ENCODE measurements at regions of chrX and their contacts with region 1.

Region 1: DNA sequence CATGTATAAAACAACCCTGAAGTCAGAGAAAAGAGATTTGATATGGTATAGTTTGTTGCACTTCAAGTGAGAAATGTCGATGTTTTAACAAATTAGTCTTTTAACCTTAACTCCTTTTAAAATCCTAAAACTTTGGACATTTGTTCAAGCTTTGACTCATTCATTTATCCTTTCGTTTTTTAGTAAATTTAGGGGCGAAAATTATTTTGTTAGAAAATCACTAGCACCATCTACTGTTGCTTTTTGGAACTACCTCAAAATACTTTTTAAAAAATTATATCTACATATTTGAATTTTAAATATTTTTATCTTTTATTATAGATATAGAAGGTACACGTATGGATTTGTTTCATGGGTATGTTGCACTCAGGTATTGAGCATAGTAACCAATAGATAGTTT is 165.1 kb upstream of the POF1B start:
- DNase-seq: no peak
- ATAC-seq: no peak
- H3K4me3 ChIP-seq: no peak overlapping the region
- H3K4me3 Mint-ChIP-seq: no peak overlapping the region
- H3K27ac ChIP-seq: no peak overlapping the region
- H3K27ac Mint-ChIP-seq: no peak overlapping the region
- H3K4me1 ChIP-seq: no peaks in the 10 kb centered on the region
- H3K4me1 Mint-ChIP-seq: no peaks in the 10 kb centered on the region
- H3K27me3 ChIP-seq: no peaks in the 10 kb centered on the region
- H3K27me3 Mint-ChIP-seq: no peaks in the 10 kb centered on the region
- CTCF ChIP-seq: peak; percentile 20

Region 2: GRCh38 chrX:85084770-85085393 is 459.7 kb before region 1 on chrX:
- CTCF ChIA-PET with region 1: no interaction called
- POLR2A ChIA-PET with region 1: no interaction called
- intact Hi-C with region 1: loop called in 1 of 2 experiments (anchors 5 kb)
- DNase-seq: peak in 3 of 9 experiments; percentile 10 to 39 (median 24)
- ATAC-seq: no peak
- H3K4me3 ChIP-seq: no peak overlapping the region
- H3K4me3 Mint-ChIP-seq: no peak overlapping the region
- H3K27ac ChIP-seq: no peak overlapping the region
- H3K27ac Mint-ChIP-seq: no peak overlapping the region
- H3K4me1 ChIP-seq: no peaks in the 10 kb centered on the region
- H3K4me1 Mint-ChIP-seq: no peaks in the 10 kb centered on the region
- H3K27me3 ChIP-seq: no peaks in the 10 kb centered on the region
- H3K27me3 Mint-ChIP-seq: no peaks in the 10 kb centered on the region
- CTCF ChIP-seq: peak; percentile 70

Region 3: GRCh38 chrX:85111347-85111746 is 433.3 kb before region 1 on chrX:
- CTCF ChIA-PET with region 1: no interaction called
- POLR2A ChIA-PET with region 1: no interaction called
- intact Hi-C with region 1: loop called in 1 of 2 experiments (anchors 2 kb)
- DNase-seq: peak in 2 of 9 experiments; percentile 2
- ATAC-seq: no peak
- H3K4me3 ChIP-seq: no peak overlapping the region
- H3K4me3 Mint-ChIP-seq: no peak overlapping the region
- H3K27ac ChIP-seq: no peak overlapping the region
- H3K27ac Mint-ChIP-seq: no peak overlapping the region
- H3K4me1 ChIP-seq: no peaks in the 10 kb centered on the region
- H3K4me1 Mint-ChIP-seq: no peaks in the 10 kb centered on the region
- H3K27me3 ChIP-seq: no peaks in the 10 kb centered on the region
- H3K27me3 Mint-ChIP-seq: peaks cover 3% of the 10 kb centered on the region
- CTCF ChIP-seq: peak; percentile 26